ENCODE measurements at regions of chr11 and their contacts with region 1.

Region 1: DNA sequence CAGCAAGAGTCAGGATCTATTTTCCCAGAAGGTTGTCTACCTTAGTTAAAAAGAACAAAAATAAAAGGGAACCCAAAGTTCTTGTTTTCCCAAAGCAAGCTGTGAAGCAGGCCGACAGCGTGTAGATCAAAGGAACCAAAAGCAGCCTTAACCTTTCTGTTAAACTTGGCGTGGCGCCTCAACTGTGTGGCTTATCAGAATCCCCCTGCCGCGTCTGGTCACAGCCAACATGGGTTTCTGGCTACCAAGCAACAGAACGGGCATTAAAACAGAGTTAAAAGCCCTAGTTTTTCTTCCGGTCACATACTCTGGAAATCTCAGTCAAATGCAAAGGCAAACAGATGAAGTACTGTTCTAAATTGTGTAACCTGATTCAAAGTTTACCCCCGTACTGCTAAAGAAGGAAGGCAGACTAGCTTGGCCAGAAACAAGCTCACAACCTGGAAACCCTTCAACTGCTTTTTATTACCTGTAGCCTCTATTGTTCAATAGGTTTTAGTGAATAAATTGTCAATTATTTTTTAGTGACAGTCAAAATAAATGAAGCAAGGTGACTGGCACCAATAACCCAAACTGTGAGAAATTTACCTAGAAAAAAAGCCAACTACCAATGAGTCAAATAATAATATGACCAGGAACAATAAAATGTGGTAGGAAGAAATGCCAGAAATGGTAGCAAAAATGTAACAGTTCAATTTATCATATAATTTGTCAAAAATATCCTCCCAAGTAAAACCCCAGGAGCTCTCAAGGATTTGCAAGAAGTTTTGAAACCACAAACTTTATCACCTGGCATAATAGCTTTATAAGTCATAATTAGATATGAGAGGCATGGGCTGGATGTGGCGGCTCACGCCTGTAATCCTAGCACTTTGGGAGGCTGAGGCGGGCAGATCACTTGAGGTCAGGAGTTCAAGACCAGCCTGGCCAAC is 21.4 kb downstream of the CHKA start:
- H3K4me3 Mint-ChIP-seq: no peak overlapping the region
- H3K27ac Mint-ChIP-seq: no peak overlapping the region
- H3K4me1 Mint-ChIP-seq: peaks cover 25% of the 10 kb centered on the region
- H3K27me3 Mint-ChIP-seq: no peaks in the 10 kb centered on the region

Region 2: GRCh38 chr11:68206187-68206601 is 106.5 kb after region 1 on chr11:
- intact Hi-C with region 1: loop called (anchors 10 kb)
- H3K4me3 Mint-ChIP-seq: no peak overlapping the region
- H3K27ac Mint-ChIP-seq: no peak overlapping the region
- H3K4me1 Mint-ChIP-seq: peaks cover 45% of the 10 kb centered on the region
- H3K27me3 Mint-ChIP-seq: no peaks in the 10 kb centered on the region

Measured in dendritic cell treated with granulocyte-macrophage colony-stimulating factor and Interleukin-4, amounts not matched to agents 40 ng/mL and 50 ng/mL, for 4 days (primary cell).